ENCODE measurements at regions of chr19 and their contacts with region 1.

Region 1: DNA sequence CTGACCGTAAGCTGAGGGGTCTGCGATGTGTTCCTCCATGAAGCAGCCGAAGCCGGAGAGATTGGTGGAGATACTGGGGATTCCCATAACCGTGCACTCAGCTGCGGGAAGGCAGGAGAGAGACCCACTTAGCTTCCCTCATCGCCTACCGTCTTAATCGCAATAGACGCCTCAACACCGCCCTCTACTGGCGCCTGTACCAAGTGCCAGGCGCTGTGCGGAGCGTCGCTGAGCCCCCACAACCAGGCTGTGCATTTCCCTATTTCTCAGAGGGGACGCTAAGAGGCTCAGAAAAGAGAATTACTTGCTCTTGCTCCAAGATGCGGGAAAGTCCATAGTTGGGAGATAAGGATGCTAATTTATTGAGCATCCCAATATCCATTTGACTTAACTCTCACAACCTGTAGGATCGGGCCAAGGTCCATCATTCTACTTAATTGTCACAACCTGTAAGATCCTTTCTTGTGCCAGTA is 5.8 kb downstream of the FTL start:
- DNase-seq: peak; percentile 86 to 88
- ATAC-seq: peak; percentile 25 to 55
- H3K4me3 ChIP-seq: no peak overlapping the region
- H3K27ac ChIP-seq: peak overlapping the region in 1 of 2 experiments; percentile 63; a peak in 3 of 6 replicates
- H3K4me1 ChIP-seq: peaks cover 23% of the 10 kb centered on the region
- CTCF ChIP-seq: peak; percentile 98
- EP300 ChIP-seq: no peak
- POLR2A ChIP-seq: no peak
- RAD21 ChIP-seq: peak; percentile 96 to 97

Region 2: DNA sequence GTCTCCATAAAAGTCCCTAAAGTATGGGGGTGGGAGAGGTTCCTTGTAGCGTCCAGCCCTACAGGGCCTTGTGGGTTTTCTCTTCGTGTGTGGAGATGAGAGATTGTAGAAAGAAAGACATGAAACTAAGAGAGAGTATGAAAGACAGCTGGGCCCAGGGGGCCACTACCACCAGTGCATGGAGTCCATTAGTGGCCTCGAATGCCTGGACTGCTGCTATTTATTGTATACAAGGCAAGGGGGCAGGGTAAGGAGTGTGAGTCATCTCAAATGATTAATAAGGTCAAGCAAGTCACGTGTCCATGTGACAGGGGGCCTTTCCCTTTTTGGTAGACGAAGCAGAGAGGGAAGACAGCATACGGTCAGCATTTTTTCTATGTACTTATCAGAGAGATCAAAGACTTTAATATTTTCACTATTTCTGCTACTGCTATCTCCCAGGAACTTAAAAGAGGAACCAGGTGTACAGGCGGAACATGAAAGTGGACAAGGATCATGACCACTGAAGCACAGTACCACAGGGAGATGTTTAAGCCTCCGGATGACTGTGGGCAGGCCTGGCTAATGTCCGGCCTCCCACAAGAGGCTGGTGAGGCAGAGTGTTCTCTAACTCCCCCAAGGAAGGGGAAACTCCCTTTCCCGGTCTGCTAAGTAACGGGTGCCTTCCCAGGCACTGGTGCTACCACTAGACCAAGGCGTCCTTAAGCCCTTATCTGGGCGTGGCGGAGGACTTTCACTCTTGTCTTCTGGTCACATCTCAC is 190.1 kb before region 1 on chr19:
- CTCF ChIA-PET with region 1: interaction called, 31 read pairs
- POLR2A ChIA-PET with region 1: no interaction called
- DNase-seq: peak in 1 of 2 experiments; percentile 62
- ATAC-seq: peak in 1 of 2 experiments; percentile 13; a peak in 3 of 6 replicates
- H3K4me3 ChIP-seq: no peak overlapping the region
- H3K27ac ChIP-seq: 0 out of 6 replicates have a peak overlapping the region, but pooled peaks of 1 of the 2 experiments have one; percentile 29
- H3K4me1 ChIP-seq: peaks cover 10% of the 10 kb centered on the region
- CTCF ChIP-seq: no peak
- EP300 ChIP-seq: no peak
- POLR2A ChIP-seq: no peak
- RAD21 ChIP-seq: no peak

Region 3: GRCh38 chr19:48835734-48836088 is 135.2 kb before region 1 on chr19:
- CTCF ChIA-PET with region 1: interaction called, 114 read pairs
- POLR2A ChIA-PET with region 1: interaction called, 5 read pairs
- DNase-seq: peak; percentile 94
- ATAC-seq: peak; percentile 87 to 88
- H3K4me3 ChIP-seq: peak overlapping the region; percentile 49
- H3K27ac ChIP-seq: peak overlapping the region; percentile 80 to 90
- H3K4me1 ChIP-seq: peaks cover 7% of the 10 kb centered on the region; the same call in 2 of the 3 replicates
- CTCF ChIP-seq: peak; percentile 98
- EP300 ChIP-seq: no peak
- POLR2A ChIP-seq: no peak
- RAD21 ChIP-seq: peak; percentile 97 to 98

Region 4: DNA sequence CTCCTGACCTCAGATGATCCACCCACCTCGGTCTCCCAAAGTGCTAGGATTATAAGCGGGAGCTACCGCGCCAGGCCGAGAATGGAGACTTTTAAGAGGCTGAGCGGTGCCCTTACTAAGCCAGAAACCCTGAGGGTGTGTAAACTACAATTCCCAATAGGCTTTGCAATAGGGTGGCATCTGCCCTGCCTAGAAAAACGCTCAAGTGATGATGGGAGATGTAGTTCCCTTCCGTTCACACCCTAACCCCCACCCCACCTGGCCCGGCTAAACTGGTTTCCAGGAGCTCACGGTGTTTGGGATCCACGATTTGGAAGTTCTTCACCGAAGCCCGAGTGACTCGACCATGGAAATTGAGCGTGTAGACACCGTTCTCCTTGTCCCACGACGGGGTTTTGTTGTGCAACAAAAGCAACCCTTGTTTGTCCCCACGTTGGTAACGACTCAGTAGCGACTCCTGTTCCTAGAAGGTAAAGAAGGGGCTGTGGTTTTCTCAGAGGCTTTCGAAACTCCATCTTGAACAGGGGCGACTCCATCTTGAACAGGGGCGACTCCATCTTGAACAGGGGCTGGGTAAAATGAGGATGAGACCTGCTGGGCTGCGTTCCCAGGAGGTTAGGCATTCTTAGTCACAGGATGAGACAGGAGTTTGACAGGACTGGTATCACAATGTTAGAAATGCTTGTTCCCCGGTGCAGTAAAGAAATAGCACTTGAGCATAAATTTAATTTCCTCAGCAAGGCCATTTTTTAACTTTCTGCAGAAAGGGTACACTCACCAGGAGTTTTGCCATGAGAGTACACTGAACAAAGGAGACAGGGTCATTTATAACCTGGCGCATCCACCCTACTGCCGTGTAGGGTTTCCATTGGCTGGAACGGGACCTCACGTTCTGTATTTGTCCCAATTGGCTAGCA is 89.0 kb before region 1 on chr19:
- CTCF ChIA-PET with region 1: interaction called, 121 read pairs
- POLR2A ChIA-PET with region 1: interaction called, 175 read pairs
- DNase-seq: peak in 1 of 2 experiments; percentile 58
- ATAC-seq: peak; percentile 56 to 58
- H3K4me3 ChIP-seq: no peak overlapping the region
- H3K27ac ChIP-seq: no peak overlapping the region
- H3K4me1 ChIP-seq: no peaks in the 10 kb centered on the region; the same call in 2 of the 3 replicates
- CTCF ChIP-seq: no peak
- EP300 ChIP-seq: no peak
- POLR2A ChIP-seq: no peak
- RAD21 ChIP-seq: no peak

Region 5: GRCh38 chr19:48926909-48927308 is 44.0 kb before region 1 on chr19:
- CTCF ChIA-PET with region 1: interaction called, 36 read pairs
- POLR2A ChIA-PET with region 1: interaction called, 7 read pairs
- DNase-seq: peak; percentile 65 to 87
- ATAC-seq: peak; percentile 67 to 84
- H3K4me3 ChIP-seq: no peak overlapping the region
- H3K27ac ChIP-seq: peak overlapping the region; percentile 67 to 85
- H3K4me1 ChIP-seq: peaks cover 41% of the 10 kb centered on the region
- CTCF ChIP-seq: no peak
- EP300 ChIP-seq: peak in 1 of 2 experiments; percentile 39; a peak in 1 of 5 replicates
- POLR2A ChIP-seq: no peak
- RAD21 ChIP-seq: no peak

Region 6: GRCh38 chr19:48946463-48947257 is 24.3 kb before region 1 on chr19:
- CTCF ChIA-PET with region 1: interaction called, 16 read pairs
- POLR2A ChIA-PET with region 1: interaction called, 4 read pairs
- DNase-seq: no peak
- ATAC-seq: peak in 1 of 2 experiments; percentile 21; a peak in 3 of 6 replicates
- H3K4me3 ChIP-seq: no peak overlapping the region
- H3K27ac ChIP-seq: peak overlapping the region in 1 of 2 experiments; percentile 29; a peak in 2 of 6 replicates
- H3K4me1 ChIP-seq: no peaks in the 10 kb centered on the region
- CTCF ChIP-seq: no peak
- EP300 ChIP-seq: no peak
- POLR2A ChIP-seq: no peak
- RAD21 ChIP-seq: no peak

Region 7: GRCh38 chr19:48982280-48982679 is 11.3 kb after region 1 on chr19:
- CTCF ChIA-PET with region 1: interaction called, 100 read pairs
- POLR2A ChIA-PET with region 1: interaction called, 15 read pairs
- DNase-seq: no peak
- ATAC-seq: peak in 1 of 2 experiments; percentile 19; a peak in 1 of 6 replicates
- H3K4me3 ChIP-seq: no peak overlapping the region
- H3K27ac ChIP-seq: no peak overlapping the region
- H3K4me1 ChIP-seq: peaks cover 13% of the 10 kb centered on the region
- CTCF ChIP-seq: no peak
- EP300 ChIP-seq: no peak
- POLR2A ChIP-seq: no peak
- RAD21 ChIP-seq: no peak

Measured in A549 (cell line).